Left colon (tissue), 2 donors: ENCODE measurements at regions of chr11 and their contacts with region 1.

Region 1: DNA sequence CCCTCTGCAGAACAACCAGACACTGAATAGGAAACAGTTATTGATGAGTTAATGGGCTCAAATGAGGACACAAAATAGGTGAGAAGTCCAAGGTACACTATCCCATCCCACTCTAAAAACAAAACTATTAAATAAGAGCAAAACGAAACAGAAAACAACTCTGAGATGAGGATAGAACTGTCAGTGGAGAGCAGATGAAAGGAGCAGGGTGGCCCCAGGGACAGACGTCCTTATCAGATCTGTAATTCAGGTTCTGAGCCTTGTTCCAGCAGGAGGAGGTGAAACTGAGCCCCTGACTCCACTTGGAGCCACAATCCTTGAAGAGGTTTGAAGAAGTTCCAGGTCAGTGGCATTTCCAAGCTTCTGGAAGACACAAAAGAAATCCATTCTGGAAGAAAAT is 8.5 kb upstream of the SNX19 start:
- DNase-seq: no peak
- ATAC-seq: no peak

Region 2: GRCh38 chr11:131089697-131090245 is 165.0 kb after region 1 on chr11:
- intact Hi-C with region 1: no loop called
- DNase-seq: no peak
- ATAC-seq: no peak

Region 3: GRCh38 chr11:131674051-131674755 is 749.4 kb after region 1 on chr11:
- intact Hi-C with region 1: loop called in 1 of 2 experiments (anchors 10 kb)
- DNase-seq: peak in 1 of 2 donors; percentile 55
- ATAC-seq: peak; percentile 78